Heart right ventricle (tissue), 16 donors: ENCODE measurements at regions of chr18 and their contacts with region 1.

Region 1: GRCh38 chr18:30280880-30281470 is 761.6 kb downstream of the DSC3 start:
- DNase-seq: peak in 1 of 2 donors; percentile 4
- ATAC-seq: no peak
- H3K4me3 ChIP-seq: no peak overlapping the region
- H3K27ac ChIP-seq: no peak overlapping the region
- H3K4me1 ChIP-seq: no peaks in the 10 kb centered on the region
- H3K27me3 ChIP-seq: no peaks in the 10 kb centered on the region
- CTCF ChIP-seq: peak; percentile 12 to 67 (median 58)

Region 2: DNA sequence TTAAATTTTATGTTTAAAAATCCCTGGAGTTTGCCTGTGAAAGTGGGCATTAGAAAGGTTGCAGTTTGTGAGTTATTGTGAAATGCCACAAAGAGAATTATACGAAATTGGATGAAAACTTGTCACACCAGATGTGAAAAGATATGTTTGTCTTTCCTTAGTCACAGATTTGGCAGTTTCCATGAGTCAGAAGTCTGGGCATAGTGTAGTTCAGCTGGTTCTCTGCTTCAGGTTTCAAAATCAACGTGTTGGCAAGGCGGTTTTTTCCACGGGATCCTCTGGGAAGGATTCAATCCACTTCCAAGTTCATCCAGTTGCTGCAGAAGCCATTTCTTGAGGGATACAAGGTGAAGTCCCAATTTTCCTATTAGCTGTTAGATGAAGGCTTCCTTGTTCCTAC is 1446.1 kb before region 1 on chr18:
- intact Hi-C with region 1: no loop called
- DNase-seq: no peak
- ATAC-seq: no peak
- H3K4me3 ChIP-seq: no peak overlapping the region
- H3K27ac ChIP-seq: no peak overlapping the region
- H3K4me1 ChIP-seq: no peaks in the 10 kb centered on the region
- H3K27me3 ChIP-seq: no peaks in the 10 kb centered on the region
- CTCF ChIP-seq: no peak

Region 3: GRCh38 chr18:29616867-29617266 is 664.1 kb before region 1 on chr18:
- intact Hi-C with region 1: loop called in 1 of 10 experiments (anchors 10 kb)
- DNase-seq: no peak
- ATAC-seq: peak in 1 of 8 donors; percentile 61
- H3K4me3 ChIP-seq: no peak overlapping the region
- H3K27ac ChIP-seq: no peak overlapping the region
- H3K4me1 ChIP-seq: no peaks in the 10 kb centered on the region
- H3K27me3 ChIP-seq: no peaks in the 10 kb centered on the region
- CTCF ChIP-seq: peak in 6 of 9 donors; percentile 9 to 45 (median 36)

Region 4: GRCh38 chr18:29874519-29875098 is 406.4 kb before region 1 on chr18:
- intact Hi-C with region 1: loop called in 1 of 10 experiments (anchors 5 kb)
- DNase-seq: no peak
- ATAC-seq: no peak
- H3K4me3 ChIP-seq: no peak overlapping the region
- H3K27ac ChIP-seq: no peak overlapping the region
- H3K4me1 ChIP-seq: no peaks in the 10 kb centered on the region
- H3K27me3 ChIP-seq: no peaks in the 10 kb centered on the region
- CTCF ChIP-seq: peak in 7 of 9 donors; percentile 19 to 47 (median 37)

Region 5: DNA sequence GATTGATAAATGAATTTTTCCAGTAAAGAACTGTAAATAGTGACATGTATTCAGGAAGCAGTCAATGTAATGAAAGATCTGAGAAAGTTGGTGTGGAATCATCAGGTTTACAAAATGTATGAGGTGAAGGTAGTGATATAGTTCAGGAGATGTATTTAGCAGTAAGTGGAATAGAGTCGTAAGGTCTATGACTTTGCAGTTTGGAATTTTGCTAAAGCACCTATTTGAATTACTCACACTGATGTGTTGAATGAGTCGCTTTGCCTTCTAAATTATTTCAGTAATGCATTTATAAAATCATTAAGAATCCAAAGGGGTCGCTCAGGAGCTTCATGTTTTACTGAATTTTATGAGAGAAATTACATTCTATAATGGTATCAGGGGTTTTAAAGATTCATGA is 47.9 kb after region 1 on chr18:
- intact Hi-C with region 1: no loop called
- DNase-seq: no peak
- ATAC-seq: no peak
- H3K4me3 ChIP-seq: no peak overlapping the region
- H3K27ac ChIP-seq: no peak overlapping the region
- H3K4me1 ChIP-seq: no peaks in the 10 kb centered on the region
- H3K27me3 ChIP-seq: no peaks in the 10 kb centered on the region
- CTCF ChIP-seq: no peak

Region 6: GRCh38 chr18:30465096-30465495 is 184.1 kb after region 1 on chr18:
- intact Hi-C with region 1: no loop called
- DNase-seq: no peak
- ATAC-seq: no peak
- H3K4me3 ChIP-seq: no peak overlapping the region
- H3K27ac ChIP-seq: no peak overlapping the region
- H3K4me1 ChIP-seq: no peaks in the 10 kb centered on the region
- H3K27me3 ChIP-seq: no peaks in the 10 kb centered on the region
- CTCF ChIP-seq: no peak